Naive thymus-derived CD4-positive, alpha-beta T cell (primary cell): ENCODE measurements at regions of chrX and their contacts with region 1.

Region 1: DNA sequence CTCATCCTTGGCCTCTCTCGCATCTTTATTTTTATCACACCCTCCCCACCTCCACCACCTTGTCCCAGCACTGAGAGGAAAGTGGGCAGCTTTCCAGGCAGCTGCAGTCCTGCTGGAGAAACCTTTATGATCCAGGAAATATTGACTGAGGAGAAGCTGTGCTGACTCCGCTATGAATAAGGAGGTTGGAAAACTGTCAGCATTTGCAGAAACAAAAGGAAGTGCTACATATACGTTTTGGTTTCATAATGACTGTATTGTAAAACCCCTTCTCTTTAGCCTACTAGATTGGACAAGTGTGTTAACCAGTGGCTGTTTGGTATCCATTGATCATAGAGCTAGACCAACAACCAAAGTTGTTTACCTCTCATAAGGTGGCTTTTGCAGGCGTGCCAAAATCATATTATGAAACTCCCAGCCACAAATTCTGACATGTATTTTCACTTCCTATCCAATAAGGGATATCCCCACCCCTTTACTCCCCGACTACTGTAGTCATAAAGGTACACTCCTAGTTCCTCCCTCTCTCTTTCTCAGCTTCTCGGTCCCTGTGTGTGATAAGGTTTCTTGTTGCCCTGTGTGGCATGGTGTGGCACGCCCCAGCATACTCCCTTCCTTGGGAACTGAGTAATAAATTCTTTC is 88.4 kb downstream of the GPR143 start:
- DNase-seq: peak in 3 of 9 donors; percentile 7 to 23 (median 16)
- ATAC-seq: peak; percentile 88
- H3K4me3 ChIP-seq: no peak overlapping the region
- H3K4me3 Mint-ChIP-seq: peak overlapping the region in 2 of 10 donors; percentile 15 to 63
- H3K27ac ChIP-seq: no peak overlapping the region
- H3K27ac Mint-ChIP-seq: peak overlapping the region in 5 of 9 donors; percentile 25 to 91 (median 64)
- H3K4me1 ChIP-seq: no peaks in the 10 kb centered on the region
- H3K4me1 Mint-ChIP-seq: peaks cover 7 to 40% (median 22%) of the 10 kb centered on the region in 7 donors
- H3K27me3 ChIP-seq: no peaks in the 10 kb centered on the region
- H3K27me3 Mint-ChIP-seq: no peaks in the 10 kb centered on the region

Region 2: DNA sequence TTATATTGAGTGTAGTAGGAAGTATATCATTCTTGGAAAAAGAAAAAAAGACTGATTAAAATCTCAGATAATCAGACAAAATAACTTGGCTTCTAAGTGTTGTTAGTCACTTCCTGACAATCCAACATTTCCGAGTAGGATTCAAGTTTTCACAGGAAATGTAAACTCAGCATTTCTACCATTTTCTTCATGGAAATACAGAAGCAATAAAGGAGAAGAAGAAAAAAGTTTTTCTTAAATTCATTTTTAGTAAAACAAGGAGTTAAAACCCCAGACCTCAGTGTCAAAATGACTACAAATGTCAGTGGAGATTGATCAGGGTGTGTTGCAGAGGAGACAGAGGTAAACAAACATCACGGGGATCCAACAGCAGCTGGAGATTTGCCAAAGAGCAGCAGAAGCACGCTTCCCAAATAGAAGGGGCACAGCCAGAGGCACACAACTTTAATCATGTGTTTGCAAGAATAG is 514.0 kb before region 1 on chrX:
- CTCF ChIA-PET with region 1: no interaction called
- POLR2A ChIA-PET with region 1: no interaction called
- intact Hi-C with region 1: loop called in 1 of 2 experiments (anchors 10 kb)
- DNase-seq: no peak
- ATAC-seq: no peak
- H3K4me3 ChIP-seq: no peak overlapping the region
- H3K4me3 Mint-ChIP-seq: no peak overlapping the region
- H3K27ac ChIP-seq: no peak overlapping the region
- H3K27ac Mint-ChIP-seq: peak overlapping the region in 1 of 9 donors; percentile 9
- H3K4me1 ChIP-seq: peaks cover 0 to 3% of the 10 kb centered on the region in 2 donors
- H3K4me1 Mint-ChIP-seq: peaks cover 0 to 39% (median 16%) of the 10 kb centered on the region in 7 donors
- H3K27me3 ChIP-seq: no peaks in the 10 kb centered on the region
- H3K27me3 Mint-ChIP-seq: peaks cover 0 to 5% (median 0%) of the 10 kb centered on the region in 5 donors

Region 3: DNA sequence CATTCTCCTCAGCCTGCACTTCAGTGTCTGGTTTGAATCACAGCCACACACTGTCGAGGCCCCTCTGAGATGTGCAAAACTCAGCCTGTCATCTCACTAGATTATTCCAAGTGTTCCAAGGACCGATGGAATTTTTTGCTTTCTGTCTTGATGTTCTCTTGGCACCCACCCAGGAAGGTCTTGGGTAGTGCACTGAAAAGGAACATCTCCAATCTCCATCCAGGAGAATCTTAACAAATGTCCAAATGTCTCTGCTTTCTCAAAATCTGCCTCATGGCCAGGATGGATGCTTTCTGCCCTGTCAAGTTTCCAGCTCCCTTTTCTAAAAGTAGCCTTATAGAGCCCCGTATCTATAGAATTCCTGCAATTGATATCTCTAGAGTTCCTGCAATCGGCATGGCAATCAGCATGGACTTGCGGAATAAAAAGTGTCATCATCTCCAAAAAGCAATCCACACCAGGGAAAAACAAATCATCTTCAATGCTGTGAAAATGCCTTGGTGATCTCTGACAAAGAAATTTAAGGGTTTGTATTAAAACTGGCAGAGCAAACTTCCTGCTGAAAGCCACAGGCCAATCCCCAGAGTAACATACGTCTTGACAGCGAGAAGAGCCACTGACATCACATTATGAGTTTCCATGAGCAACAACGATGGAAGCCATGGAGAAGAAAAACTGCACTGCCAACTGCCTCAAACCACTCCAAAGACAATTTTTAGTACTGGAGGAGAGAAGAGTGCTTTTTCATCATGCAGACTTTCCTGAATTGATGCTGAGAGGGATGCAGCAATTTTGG is 428.0 kb before region 1 on chrX:
- CTCF ChIA-PET with region 1: no interaction called
- POLR2A ChIA-PET with region 1: no interaction called
- intact Hi-C with region 1: no loop called
- DNase-seq: no peak
- ATAC-seq: no peak
- H3K4me3 ChIP-seq: no peak overlapping the region
- H3K4me3 Mint-ChIP-seq: no peak overlapping the region
- H3K27ac ChIP-seq: no peak overlapping the region
- H3K27ac Mint-ChIP-seq: peak overlapping the region in 1 of 9 donors; percentile 14
- H3K4me1 ChIP-seq: no peaks in the 10 kb centered on the region
- H3K4me1 Mint-ChIP-seq: peaks cover 0 to 8% (median 3%) of the 10 kb centered on the region in 7 donors
- H3K27me3 ChIP-seq: no peaks in the 10 kb centered on the region
- H3K27me3 Mint-ChIP-seq: peaks cover 0 to 3% (median 0%) of the 10 kb centered on the region in 5 donors

Region 4: DNA sequence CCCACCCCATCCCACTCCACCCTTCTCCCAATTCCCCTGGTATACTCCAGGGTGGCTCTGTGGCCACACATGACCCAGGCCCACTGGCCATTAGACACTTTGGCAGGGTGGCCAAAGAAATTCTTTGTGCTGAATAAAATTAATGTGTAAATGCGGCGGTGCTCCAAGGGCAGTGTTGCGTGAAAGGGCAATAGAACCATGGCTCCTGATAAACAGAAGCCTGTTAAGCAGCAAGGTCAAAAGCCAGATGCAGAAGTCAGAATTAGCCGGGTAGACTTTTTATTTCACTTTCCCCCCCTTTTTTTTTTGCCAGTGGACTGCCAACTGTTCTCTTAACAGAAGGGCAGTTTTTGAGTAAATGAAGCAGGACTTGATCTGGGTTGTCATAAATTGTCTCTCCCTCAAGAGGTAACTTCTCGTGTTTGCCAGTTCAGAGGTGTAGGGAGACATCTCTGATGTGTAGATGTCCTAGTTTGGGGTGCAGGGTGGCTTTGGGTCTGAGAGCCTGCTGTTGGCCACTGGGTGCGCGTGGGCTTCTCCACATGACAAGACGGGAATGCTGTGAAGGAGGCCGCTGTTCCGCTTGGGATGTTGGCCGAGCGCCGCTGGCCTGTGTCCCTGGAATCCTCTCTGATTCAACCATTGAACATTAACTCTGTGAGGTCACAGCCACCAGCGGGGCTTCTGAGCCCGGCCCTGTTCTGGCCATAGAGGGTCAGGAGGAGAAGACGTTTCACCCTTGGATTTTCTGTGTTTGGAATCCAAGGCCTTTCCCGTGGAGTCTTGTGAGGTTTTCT is 72.9 kb before region 1 on chrX:
- CTCF ChIA-PET with region 1: no interaction called
- POLR2A ChIA-PET with region 1: no interaction called
- intact Hi-C with region 1: no loop called
- DNase-seq: no peak
- ATAC-seq: no peak
- H3K4me3 ChIP-seq: no peak overlapping the region
- H3K4me3 Mint-ChIP-seq: no peak overlapping the region
- H3K27ac ChIP-seq: no peak overlapping the region
- H3K27ac Mint-ChIP-seq: peak overlapping the region in 1 of 9 donors; percentile 12
- H3K4me1 ChIP-seq: no peaks in the 10 kb centered on the region
- H3K4me1 Mint-ChIP-seq: peaks cover 0 to 24% (median 12%) of the 10 kb centered on the region in 7 donors
- H3K27me3 ChIP-seq: no peaks in the 10 kb centered on the region
- H3K27me3 Mint-ChIP-seq: no peaks in the 10 kb centered on the region

Region 5: DNA sequence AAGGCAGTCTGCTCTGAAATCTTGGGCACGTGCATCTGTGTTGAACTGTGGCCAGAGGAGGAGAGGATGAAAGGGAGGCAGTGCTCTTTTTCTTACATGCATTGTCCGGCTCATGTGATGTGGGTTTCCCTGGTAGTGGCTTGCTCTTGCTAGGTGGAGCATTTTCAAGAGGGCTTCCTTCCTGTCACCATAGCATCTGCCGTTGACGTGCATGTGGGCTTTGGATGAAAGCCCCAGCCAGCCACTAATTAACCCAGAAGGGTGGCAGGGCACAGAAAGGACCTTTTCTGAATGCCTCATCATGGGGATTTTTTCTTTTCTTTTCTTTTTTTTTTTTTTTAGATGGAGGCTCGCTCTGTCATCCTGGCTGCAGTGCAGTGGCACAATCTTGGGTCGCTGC is 32.9 kb before region 1 on chrX:
- CTCF ChIA-PET with region 1: no interaction called
- POLR2A ChIA-PET with region 1: no interaction called
- intact Hi-C with region 1: loop called in 1 of 2 experiments (anchors 1 kb)
- DNase-seq: peak in 8 of 9 donors; percentile 22 to 58 (median 36)
- ATAC-seq: peak; percentile 92
- H3K4me3 ChIP-seq: no peak overlapping the region
- H3K4me3 Mint-ChIP-seq: peak overlapping the region in 8 of 10 donors; percentile 28 to 60 (median 49)
- H3K27ac ChIP-seq: no peak overlapping the region
- H3K27ac Mint-ChIP-seq: peak overlapping the region in 7 of 9 donors; percentile 9 to 78 (median 52)
- H3K4me1 ChIP-seq: peaks cover 3 to 4% of the 10 kb centered on the region in 2 donors
- H3K4me1 Mint-ChIP-seq: peaks cover 14 to 41% (median 36%) of the 10 kb centered on the region in 7 donors
- H3K27me3 ChIP-seq: no peaks in the 10 kb centered on the region
- H3K27me3 Mint-ChIP-seq: no peaks in the 10 kb centered on the region